GM23248 (cell line): ENCODE measurements at regions of chr12 and their contacts with region 1.

Region 1: GRCh38 chr12:70576346-70577282 is 60.6 kb downstream of the PTPRB start:
- DNase-seq: peak; percentile 90
- H3K4me3 ChIP-seq: no peak overlapping the region
- H3K27ac ChIP-seq: no peak overlapping the region
- H3K4me1 ChIP-seq: peaks cover 4% of the 10 kb centered on the region; the same call in 1 of the 2 replicates
- H3K27me3 ChIP-seq: no peaks in the 10 kb centered on the region

Region 2: GRCh38 chr12:69880571-69880970 is 696.0 kb before region 1 on chr12:
- in situ Hi-C with region 1: loop called (anchors 5 kb)
- DNase-seq: peak; percentile 28
- H3K4me3 ChIP-seq: no peak overlapping the region
- H3K27ac ChIP-seq: no peak overlapping the region
- H3K4me1 ChIP-seq: no peaks in the 10 kb centered on the region
- H3K27me3 ChIP-seq: no peaks in the 10 kb centered on the region